ENCODE measurements at regions of chrX and their contacts with region 1.

Region 1: DNA sequence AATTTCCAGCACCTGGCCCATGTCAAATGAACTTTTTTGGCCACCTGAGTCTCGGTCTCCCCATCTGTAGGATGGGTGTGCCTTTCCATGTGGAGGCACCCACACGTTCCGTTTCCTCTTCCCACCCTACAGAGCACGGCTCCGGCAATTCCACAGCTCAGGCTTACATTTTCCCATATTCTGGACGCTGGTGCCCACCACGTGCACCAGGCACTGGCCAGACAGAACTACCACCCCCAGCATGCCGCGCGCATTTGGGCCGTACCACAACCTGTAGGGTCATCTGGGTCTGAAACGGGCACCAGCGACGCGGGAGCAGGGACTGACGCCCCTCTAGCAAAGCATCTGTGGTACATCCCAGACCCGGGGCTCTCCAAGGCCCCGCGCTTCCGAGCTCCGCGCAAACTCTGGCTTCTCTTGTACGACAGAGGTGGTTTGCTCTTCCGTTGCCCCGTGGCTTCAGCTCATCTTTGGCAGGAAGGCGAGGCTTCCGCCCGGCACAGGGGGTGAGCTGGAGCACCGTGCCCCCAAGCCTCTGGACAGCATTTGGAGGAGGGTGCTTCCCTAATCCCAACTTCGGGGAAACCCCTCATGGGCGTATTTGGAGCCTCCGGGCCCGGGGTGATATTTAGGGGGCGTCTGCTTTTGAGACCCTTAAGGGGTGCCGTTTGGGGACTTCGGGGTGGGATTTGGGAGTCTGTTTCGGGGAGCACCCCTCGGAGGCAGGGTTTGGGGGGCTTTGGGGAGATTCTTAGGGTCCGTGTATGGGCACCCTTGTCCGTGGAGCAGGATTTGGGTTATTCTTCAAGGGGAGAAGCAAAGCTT is 3.0 kb upstream of the UBA1 start:
- DNase-seq: peak; percentile 85

Region 2: GRCh38 chrX:47144626-47145394 is 45.8 kb before region 1 on chrX and contains the starts of genes NDUFB11 and RBM10:
- CTCF ChIA-PET with region 1: no interaction called
- POLR2A ChIA-PET with region 1: interaction called, 24 read pairs
- DNase-seq: peak; percentile 85

Region 3: GRCh38 chrX:47384502-47384901 is 193.8 kb after region 1 on chrX:
- CTCF ChIA-PET with region 1: interaction called, 8 read pairs
- POLR2A ChIA-PET with region 1: interaction called, 11 read pairs
- DNase-seq: peak; percentile 61

Region 4: GRCh38 chrX:47420265-47420664 is 229.6 kb after region 1 on chrX:
- CTCF ChIA-PET with region 1: no interaction called
- POLR2A ChIA-PET with region 1: no interaction called
- DNase-seq: no peak